Stomach (tissue), 19 donors: ENCODE measurements at regions of chr17 and their contacts with region 1.

Region 1: GRCh38 chr17:80426681-80427326 is 11.8 kb downstream of the ENDOV start:
- DNase-seq: peak; percentile 79 to 92
- H3K4me3 ChIP-seq: no peak overlapping the region
- H3K27ac ChIP-seq: no peak overlapping the region
- H3K4me1 ChIP-seq: peaks cover 0 to 18% (median 13%) of the 10 kb centered on the region in 4 donors
- H3K27me3 ChIP-seq: no peaks in the 10 kb centered on the region
- CTCF ChIP-seq: peak in 6 of 7 experiments; percentile 23 to 97 (median 94)
- EP300 ChIP-seq: no peak
- POLR2A ChIP-seq: no peak

Region 2: GRCh38 chr17:80327518-80327917 is 99.3 kb before region 1 on chr17:
- intact Hi-C with region 1: no loop called
- DNase-seq: no peak
- H3K4me3 ChIP-seq: no peak overlapping the region
- H3K27ac ChIP-seq: no peak overlapping the region
- H3K4me1 ChIP-seq: no peaks in the 10 kb centered on the region
- H3K27me3 ChIP-seq: no peaks in the 10 kb centered on the region
- CTCF ChIP-seq: no peak
- EP300 ChIP-seq: no peak
- POLR2A ChIP-seq: no peak

Region 3: DNA sequence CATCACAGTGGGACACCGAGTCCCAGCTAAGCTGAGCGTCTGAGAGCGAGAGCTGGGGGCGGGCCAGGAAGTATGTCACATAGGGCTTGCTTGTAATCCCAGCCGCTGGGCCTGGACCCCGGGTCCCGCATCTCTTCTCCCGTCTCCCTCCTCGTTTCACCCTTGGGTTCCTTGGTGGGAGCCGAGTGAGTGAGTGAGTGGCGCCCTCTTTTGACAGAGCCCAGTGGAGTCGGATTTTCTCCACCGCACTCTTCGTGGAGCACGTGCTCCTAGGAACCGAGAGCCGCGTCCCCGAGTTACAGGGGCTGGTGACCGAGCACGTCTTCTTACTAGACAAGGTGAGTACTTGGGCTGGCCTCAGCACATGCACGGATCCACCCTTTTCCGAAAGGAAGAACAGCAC is 62.6 kb before region 1 on chr17:
- intact Hi-C with region 1: no loop called
- DNase-seq: peak in 1 of 2 donors; percentile 42
- H3K4me3 ChIP-seq: no peak overlapping the region
- H3K27ac ChIP-seq: no peak overlapping the region
- H3K4me1 ChIP-seq: no peaks in the 10 kb centered on the region
- H3K27me3 ChIP-seq: no peaks in the 10 kb centered on the region
- CTCF ChIP-seq: peak in 1 of 7 experiments; percentile 4
- EP300 ChIP-seq: no peak
- POLR2A ChIP-seq: no peak

Region 4: DNA sequence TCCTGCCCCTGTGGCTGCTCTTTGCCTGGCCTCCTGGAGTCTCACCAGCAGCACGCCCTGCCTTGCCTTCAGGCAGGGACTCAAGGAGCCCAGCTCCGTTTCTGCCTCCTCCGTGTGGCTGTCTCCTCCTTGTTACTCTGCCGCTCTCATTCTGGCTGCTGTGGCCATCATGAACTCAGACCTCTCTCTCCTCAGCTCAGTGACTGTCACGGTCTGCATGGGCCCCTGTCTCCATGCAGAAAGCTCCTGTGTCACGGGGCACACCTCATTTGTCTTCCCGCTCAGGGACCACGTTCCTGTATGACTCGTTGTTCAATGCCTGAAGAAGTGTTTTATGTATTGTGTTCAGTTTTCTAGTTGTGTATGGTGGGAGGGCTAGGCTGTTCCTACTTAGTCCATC is 143.1 kb after region 1 on chr17:
- intact Hi-C with region 1: loop called (anchors 5 kb)
- DNase-seq: no peak
- H3K4me3 ChIP-seq: no peak overlapping the region
- H3K27ac ChIP-seq: no peak overlapping the region
- H3K4me1 ChIP-seq: peaks cover 0 to 9% (median 4%) of the 10 kb centered on the region in 4 donors
- H3K27me3 ChIP-seq: no peaks in the 10 kb centered on the region
- CTCF ChIP-seq: no peak
- EP300 ChIP-seq: no peak
- POLR2A ChIP-seq: no peak

Region 5: DNA sequence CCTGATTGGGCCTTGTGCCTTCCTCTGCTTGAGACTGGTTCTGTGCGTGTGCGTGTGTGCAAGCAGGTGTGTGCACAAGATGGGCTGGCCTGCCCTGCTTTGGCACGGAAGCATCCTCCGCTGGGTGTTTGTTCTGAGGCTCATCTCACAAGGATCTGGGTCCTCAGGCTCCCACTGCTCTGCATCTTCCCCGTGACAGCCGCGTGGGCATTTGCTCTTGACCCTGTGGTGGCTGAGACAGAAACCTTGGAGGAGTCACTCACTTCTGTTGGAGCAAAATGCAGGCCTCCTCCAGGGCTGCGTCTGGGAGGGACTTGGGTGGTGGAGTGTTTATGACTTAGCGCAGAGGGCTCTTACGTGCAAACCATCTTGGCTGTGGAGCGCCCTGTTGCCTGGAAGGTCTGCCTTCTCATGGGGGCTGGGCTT is 237.0 kb after region 1 on chr17:
- intact Hi-C with region 1: no loop called
- DNase-seq: peak in 1 of 2 donors; percentile 71
- H3K4me3 ChIP-seq: no peak overlapping the region
- H3K27ac ChIP-seq: peak overlapping the region in 3 of 5 donors; percentile 13 to 58 (median 46)
- H3K4me1 ChIP-seq: peaks cover 0 to 25% (median 16%) of the 10 kb centered on the region in 4 donors
- H3K27me3 ChIP-seq: no peaks in the 10 kb centered on the region
- CTCF ChIP-seq: no peak
- EP300 ChIP-seq: no peak
- POLR2A ChIP-seq: no peak

Region 6: DNA sequence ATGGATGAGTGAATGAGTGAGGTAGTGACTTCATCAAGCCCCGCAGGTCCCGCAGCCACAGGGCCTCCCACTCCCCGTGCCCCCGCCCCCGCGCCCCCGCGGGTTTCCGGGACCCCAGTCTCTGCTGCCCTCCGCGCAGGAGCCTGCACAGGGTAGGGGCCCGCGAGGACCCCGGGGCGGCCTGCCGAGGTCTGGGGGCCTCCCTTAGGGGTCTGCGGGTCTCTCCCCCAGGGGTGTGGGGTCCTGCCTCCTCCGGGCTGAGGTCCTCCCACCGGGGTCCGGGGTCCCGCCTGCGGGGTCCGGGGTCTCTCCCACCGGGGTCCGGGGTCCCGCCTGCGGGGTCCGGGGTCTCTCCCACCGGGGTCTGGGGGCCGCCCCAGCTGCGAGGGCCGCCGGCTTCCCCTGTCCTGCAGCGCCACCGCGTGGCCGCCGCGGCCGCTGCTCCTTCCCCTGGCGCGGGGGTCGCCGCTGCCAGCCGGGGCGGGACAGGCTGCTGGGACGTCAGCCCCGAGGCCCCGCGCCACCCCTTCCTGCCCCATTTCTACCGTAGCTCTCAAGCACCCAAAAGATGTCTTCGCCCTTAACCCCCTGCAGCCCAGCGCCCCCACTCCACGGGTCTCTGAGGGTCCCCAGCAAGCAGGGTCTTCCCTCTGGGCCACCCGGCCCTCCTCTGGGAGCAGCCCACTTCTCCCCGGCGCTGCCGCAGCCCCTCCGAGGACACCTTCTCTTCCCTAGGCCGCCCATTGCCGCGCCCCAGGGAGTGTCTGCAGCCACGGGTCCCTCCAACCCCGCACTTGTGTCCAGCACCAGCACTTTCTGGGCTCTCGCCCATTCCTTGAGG is 554.5 kb after region 1 on chr17:
- intact Hi-C with region 1: loop called (anchors 5 kb)
- DNase-seq: peak in 1 of 2 donors; percentile 73
- H3K4me3 ChIP-seq: peak overlapping the region in 3 of 4 donors; percentile 29 to 33 (median 30)
- H3K27ac ChIP-seq: no peak overlapping the region
- H3K4me1 ChIP-seq: peaks cover 7 to 21% (median 13%) of the 10 kb centered on the region in 4 donors
- H3K27me3 ChIP-seq: peaks cover 0 to 37% (median 25%) of the 10 kb centered on the region in 3 donors
- CTCF ChIP-seq: peak in 4 of 7 experiments; percentile 56 to 91 (median 82)
- EP300 ChIP-seq: no peak
- POLR2A ChIP-seq: no peak